ENCODE measurements at regions of chr9 and their contacts with region 1.

Region 1: DNA sequence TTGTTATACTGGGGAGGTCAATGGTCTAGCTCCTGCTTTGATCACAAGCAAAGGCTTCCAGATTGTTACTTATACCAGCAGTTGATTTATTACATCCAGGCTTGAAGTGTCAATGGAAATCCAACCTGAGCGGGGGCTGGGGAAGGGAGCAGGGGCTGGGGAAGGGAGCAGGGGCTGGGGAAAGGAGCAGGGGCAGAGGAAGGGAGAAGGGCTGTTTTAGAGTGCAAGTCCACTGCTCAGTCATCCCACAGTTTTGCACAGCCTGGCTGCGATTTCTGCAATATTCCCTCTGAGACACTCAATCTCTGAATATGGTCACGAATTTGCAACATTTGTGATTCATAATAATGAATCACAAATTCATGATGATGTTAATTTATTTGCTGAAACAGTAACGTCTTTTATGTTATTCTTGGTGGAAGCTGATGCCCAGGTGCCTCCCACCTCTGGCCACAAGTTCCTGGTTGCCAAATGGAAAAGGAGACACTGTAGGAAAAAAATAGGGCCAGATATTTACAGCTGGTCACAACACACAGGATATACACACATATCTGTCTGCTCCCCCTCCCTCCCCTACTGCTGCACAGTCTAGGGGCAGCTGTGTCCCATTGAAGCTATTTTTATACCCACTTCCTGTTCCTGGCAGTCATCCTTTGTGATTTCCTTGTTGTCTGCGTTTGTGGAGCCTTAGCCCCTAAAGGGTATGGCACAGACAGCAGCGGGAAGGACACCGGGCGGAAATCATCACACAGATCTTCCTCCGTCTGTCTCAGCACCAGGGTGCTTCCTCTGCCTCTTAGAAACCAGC is 325.1 kb downstream of the GADD45G start:
- DNase-seq: no peak
- H3K4me3 ChIP-seq: no peak overlapping the region
- H3K27ac ChIP-seq: no peak overlapping the region
- H3K4me1 ChIP-seq: peaks cover 20 to 30% of the 10 kb centered on the region in 2 donors
- H3K27me3 ChIP-seq: no peaks in the 10 kb centered on the region
- CTCF ChIP-seq: no peak
- POLR2A ChIP-seq: no peak

Region 2: GRCh38 chr9:89878687-89879086 is 51.2 kb before region 1 on chr9:
- intact Hi-C with region 1: no loop called
- DNase-seq: peak; percentile 18 to 21
- H3K4me3 ChIP-seq: no peak overlapping the region
- H3K27ac ChIP-seq: no peak overlapping the region
- H3K4me1 ChIP-seq: peaks cover 0 to 6% of the 10 kb centered on the region in 2 donors
- H3K27me3 ChIP-seq: no peaks in the 10 kb centered on the region
- CTCF ChIP-seq: no peak
- POLR2A ChIP-seq: no peak

Region 3: GRCh38 chr9:90102292-90102901 is 172.5 kb after region 1 on chr9:
- intact Hi-C with region 1: loop called (anchors 10 kb)
- DNase-seq: peak; percentile 91 to 93
- H3K4me3 ChIP-seq: no peak overlapping the region
- H3K27ac ChIP-seq: no peak overlapping the region
- H3K4me1 ChIP-seq: peaks cover 10 to 11% of the 10 kb centered on the region in 2 donors
- H3K27me3 ChIP-seq: no peaks in the 10 kb centered on the region
- CTCF ChIP-seq: peak in 5 of 6 experiments; percentile 73 to 98 (median 93)
- POLR2A ChIP-seq: no peak